BJ (cell line): ENCODE measurements at regions of chr5 and their contacts with region 1.

Region 1: DNA sequence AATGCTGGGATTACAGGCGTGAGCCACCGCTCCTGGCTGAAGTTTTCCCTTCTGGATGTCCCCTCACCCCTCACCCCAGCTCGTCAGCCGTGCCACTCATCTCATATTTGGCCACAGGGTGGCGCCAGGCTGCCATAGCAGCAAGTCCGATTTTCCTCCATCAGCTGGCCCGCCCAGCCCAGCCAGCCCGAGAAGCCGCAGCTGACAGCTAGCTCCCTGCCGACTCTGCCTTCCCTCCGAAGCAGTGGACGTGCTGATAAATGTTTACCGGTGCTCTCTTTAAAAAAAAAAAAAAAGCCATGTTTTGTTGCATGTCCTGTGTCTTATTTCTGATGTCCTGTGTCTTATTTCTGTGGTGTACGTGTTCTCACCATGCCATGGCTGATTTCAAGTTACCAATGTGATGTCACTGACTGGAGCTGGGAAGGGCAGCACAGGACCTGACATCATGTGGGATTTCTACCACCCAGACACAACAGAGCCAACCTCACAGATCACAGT is 58.3 kb downstream of the PFDN1 start:
- DNase-seq: no peak
- H3K4me3 ChIP-seq: no peak overlapping the region
- H3K27me3 ChIP-seq: no peaks in the 10 kb centered on the region
- CTCF ChIP-seq: peak; percentile 86

Region 2: GRCh38 chr5:140261403-140262171 is 17.0 kb after region 1 on chr5:
- CTCF ChIA-PET with region 1: interaction called, 22 read pairs
- POLR2A ChIA-PET with region 1: no interaction called
- DNase-seq: peak; percentile 52
- H3K4me3 ChIP-seq: no peak overlapping the region
- H3K27me3 ChIP-seq: no peaks in the 10 kb centered on the region
- CTCF ChIP-seq: peak; percentile 22; the same call in 1 of the 2 replicates

Region 3: DNA sequence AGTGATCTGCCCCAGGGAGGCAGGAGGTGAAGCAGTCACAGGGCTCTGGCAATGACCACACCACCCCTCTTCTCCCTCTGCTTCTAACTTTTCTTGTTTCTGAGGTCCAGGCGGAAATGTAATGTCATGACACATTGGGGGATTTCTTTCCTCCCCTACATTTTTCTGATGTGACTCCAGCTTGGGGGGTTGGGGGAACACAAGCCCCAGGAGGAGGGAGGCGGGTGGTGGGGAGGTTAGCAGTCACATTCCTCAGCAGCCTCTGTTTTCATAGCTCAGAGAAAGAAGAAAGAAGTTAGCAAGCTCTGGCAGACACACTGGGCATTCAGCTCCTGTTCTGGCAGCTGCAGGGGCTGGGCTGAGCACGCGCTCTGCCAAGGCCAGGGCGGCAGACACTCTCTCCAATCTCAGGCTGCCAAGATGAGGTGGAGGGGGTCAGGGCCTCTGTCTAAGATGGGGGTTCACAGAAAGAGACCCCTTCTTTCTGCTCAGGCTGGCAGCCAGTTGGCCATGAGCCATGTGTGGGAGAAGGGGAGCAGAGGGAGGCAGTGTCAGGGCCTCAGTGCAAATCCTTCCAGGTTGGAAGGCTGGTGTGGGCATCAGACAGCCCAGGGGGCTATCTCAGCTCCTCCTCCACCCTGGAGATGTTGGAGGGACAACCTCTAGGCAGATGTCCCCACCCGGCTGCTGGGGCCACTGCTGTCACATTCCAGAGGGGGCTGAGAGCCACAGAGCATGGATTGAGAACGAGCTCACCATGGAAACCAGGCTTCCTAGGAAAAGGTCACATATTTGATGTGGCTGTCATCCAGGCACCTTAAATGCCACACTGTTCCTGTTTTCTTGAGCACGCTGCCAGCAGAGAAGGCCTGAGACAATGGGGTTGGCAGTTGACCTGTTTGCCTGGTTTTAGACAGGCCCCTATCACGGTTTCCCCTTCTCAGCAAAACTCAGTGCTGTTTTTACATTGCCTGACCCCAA is 78.5 kb after region 1 on chr5:
- CTCF ChIA-PET with region 1: interaction called, 17 read pairs
- POLR2A ChIA-PET with region 1: no interaction called
- DNase-seq: peak; percentile 77
- H3K4me3 ChIP-seq: no peak overlapping the region
- H3K27me3 ChIP-seq: no peaks in the 10 kb centered on the region
- CTCF ChIP-seq: no peak

Region 4: GRCh38 chr5:140346348-140347101 is 102.0 kb after region 1 on chr5 and contains the start of gene HBEGF:
- CTCF ChIA-PET with region 1: interaction called, 813 read pairs
- POLR2A ChIA-PET with region 1: interaction called, 6 read pairs
- DNase-seq: no peak
- H3K4me3 ChIP-seq: peak within 1 kb of the TSS; percentile 76
- H3K27me3 ChIP-seq: no peaks in the 10 kb centered on the region
- CTCF ChIP-seq: peak; percentile 43
- polyA plus RNA-seq, gene HBEGF: 2.4 and 3.1 TPM in 2 replicates

Region 5: DNA sequence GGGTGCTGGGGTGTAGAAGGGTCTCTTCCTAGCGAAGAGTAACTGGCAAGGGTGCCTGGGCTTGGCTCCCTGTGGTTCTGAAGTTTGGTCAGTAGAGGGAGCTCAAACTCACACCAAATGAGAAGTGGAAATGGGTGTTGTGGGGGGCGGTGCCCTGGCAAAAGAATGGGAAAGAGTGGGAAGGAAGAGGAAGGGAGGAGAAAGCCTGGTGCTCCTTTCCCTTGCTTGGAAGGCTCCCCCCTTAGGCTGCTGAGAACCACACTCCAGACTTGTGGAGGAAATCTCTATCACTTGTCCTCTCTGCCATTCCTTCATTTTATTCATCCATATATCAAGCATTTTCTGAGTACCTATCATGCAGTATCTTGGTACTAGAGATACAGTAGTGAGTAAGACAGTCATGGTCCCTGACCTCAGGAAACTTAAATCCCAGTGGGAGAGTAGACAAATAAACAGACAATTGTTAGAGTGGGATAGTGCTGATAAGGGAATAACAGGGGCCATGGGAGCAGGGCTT is 128.5 kb after region 1 on chr5:
- CTCF ChIA-PET with region 1: interaction called, 230 read pairs
- POLR2A ChIA-PET with region 1: no interaction called
- DNase-seq: no peak
- H3K4me3 ChIP-seq: no peak overlapping the region
- H3K27me3 ChIP-seq: 0 out of 2 replicates have a peak, but pooled peaks cover 2% of the 10 kb centered on the region
- CTCF ChIP-seq: peak; percentile 84